BJ (cell line): ENCODE measurements at regions of chr12 and their contacts with region 1.

Region 1: GRCh38 chr12:123983822-123984485 is 10.9 kb downstream of the ZNF664 start:
- DNase-seq: no peak
- H3K4me3 ChIP-seq: no peak overlapping the region
- H3K27me3 ChIP-seq: no peaks in the 10 kb centered on the region
- CTCF ChIP-seq: peak; percentile 73

Region 2: DNA sequence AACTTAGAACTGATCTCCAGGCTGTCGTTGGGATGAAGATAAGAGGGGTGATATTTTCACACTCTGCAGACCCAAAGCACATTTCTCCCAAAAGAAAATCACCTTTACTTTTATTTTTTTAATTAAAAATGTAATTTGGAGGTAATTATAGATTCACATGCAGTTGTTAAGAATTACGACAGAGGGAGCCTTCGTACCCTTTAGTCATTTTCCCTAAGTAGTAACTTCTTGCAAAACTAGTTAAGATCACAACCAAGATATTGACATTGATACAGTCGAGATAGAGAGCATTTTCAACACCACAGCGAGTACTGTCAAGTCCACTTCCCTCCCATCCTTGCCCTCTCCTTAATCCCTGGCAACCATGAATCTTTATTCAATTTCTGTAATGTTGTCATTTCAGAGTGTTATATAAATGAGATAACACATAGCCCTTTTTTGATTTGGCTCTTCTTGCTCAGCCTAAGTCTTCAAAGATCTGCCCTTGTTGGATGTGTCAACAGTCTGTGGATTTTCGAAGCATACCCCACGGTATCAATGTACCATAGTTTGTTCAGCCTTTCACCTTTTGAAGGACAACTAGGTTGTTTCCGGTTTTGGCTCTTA is 182.3 kb before region 1 on chr12:
- CTCF ChIA-PET with region 1: interaction called, 54 read pairs
- POLR2A ChIA-PET with region 1: no interaction called
- DNase-seq: no peak
- H3K4me3 ChIP-seq: no peak overlapping the region
- H3K27me3 ChIP-seq: no peaks in the 10 kb centered on the region
- CTCF ChIP-seq: peak; percentile 52

Region 3: DNA sequence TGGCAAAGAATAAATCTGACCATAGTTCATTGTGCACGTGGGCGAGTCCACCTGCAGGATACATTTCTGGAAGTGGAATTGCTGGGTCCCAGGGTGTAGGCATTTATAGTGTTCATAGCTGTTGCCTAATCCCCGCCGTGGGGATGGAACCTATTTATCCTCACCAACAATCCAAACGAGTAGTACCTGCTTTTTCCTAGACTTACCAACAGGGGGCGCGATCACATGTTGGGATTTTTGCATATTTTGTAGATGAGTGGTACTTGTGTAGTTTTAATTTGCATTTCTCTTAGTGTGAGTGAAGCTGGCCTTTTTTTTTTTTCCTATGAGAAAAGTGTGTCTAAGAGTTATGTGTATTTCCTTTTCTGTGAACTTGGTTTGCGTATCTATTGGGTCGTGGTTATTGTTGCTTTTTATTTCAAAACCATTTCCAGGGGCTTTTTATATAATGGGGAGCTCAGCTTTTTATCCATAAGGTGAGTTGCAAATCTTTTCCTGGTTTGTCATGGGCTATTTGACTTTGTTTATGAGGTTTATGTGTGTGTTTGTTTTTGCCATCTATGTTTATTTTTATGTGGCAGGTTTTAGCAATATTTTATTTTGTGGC is 78.5 kb before region 1 on chr12:
- CTCF ChIA-PET with region 1: interaction called, 48 read pairs
- POLR2A ChIA-PET with region 1: no interaction called
- DNase-seq: peak; percentile 51
- H3K4me3 ChIP-seq: no peak overlapping the region
- H3K27me3 ChIP-seq: no peaks in the 10 kb centered on the region; the same call in 1 of the 2 replicates
- CTCF ChIP-seq: peak; percentile 75

Region 4: DNA sequence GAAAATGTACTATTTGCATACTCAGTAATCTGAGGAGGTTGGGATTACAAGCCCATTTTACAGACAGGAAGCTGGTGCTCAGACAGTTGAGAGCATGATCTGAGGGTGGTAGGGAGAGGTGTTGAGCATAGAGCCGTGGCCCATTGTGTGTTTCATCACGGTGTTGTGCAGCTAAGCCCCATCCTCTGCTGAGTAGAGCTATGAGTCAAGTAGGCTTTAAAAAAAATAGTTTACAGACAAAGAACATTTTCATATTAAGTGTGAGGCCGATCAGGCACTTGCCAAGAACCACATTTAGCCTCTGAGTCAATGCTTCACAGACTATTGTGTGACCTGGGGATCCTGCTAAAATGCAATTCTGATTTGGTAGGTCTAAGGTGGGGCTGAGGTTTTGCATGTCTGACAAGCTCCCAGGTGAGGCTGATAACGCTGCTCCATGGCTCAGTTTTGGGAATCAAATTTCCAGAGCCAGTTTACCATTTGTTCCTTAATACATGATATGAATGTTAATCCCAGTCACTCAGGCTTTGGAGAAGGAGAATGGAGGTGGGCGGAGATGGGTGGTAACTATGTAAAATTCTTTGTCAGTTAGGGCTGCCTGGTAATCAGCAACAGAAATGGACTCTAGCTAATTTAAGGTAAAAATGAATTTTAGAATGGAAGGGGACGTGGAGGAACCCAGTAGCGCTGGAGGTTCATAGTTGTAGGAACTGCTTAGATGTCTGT is 11.2 kb after region 1 on chr12:
- CTCF ChIA-PET with region 1: interaction called, 30 read pairs
- POLR2A ChIA-PET with region 1: no interaction called
- DNase-seq: no peak
- H3K4me3 ChIP-seq: no peak overlapping the region
- H3K27me3 ChIP-seq: no peaks in the 10 kb centered on the region
- CTCF ChIP-seq: no peak

Region 5: DNA sequence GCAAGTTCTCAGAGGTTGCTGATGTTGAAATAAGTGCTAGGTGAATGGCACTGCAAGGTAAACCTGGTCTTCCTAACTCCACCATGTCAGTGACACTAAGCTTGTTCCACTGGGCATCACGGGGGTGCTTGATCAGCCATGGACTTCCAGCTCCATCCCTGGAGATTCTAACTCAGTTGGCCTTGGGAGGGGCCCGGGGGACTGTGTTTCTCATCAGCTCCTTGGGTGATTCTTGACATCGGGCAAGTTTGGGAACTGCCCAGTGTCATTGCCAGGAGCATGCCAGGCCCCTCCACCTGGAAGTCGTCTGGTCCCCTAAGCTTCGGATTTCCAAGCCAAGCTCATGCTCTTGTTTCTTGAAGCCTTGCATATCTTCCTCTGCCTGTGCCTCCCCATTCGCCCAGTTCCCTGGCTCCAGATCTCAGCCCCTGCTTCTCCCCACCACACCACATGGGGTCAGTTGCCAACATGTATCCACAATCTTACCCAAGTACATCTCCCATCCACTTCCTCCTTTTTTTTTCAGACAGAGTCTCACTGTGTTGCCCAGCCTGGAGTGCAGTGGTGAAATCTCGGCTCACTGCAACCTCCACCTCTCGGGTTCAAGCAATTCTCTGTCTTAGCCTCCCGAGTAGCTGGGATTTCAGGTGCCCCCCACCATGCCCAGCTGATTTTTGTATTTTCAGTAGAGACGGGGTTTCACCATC is 280.3 kb after region 1 on chr12:
- CTCF ChIA-PET with region 1: no interaction called
- POLR2A ChIA-PET with region 1: no interaction called
- DNase-seq: no peak
- H3K4me3 ChIP-seq: no peak overlapping the region
- H3K27me3 ChIP-seq: peaks cover 7% of the 10 kb centered on the region
- CTCF ChIP-seq: no peak